ENCODE measurements at regions of chr6 and their contacts with region 1.

Region 1: GRCh38 chr6:124742971-124743370 is 219.3 kb upstream of the RNF217 start:
- DNase-seq: no peak
- ATAC-seq: no peak
- H3K4me3 ChIP-seq: no peak overlapping the region
- H3K4me3 Mint-ChIP-seq: no peak overlapping the region
- H3K27ac ChIP-seq: no peak overlapping the region
- H3K27ac Mint-ChIP-seq: no peak overlapping the region
- H3K4me1 ChIP-seq: no peaks in the 10 kb centered on the region
- H3K4me1 Mint-ChIP-seq: no peaks in the 10 kb centered on the region
- H3K27me3 ChIP-seq: no peaks in the 10 kb centered on the region
- H3K27me3 Mint-ChIP-seq: no peaks in the 10 kb centered on the region
- CTCF ChIP-seq: no peak

Region 2: GRCh38 chr6:124694139-124694782 is 48.7 kb before region 1 on chr6:
- CTCF ChIA-PET with region 1: no interaction called
- POLR2A ChIA-PET with region 1: no interaction called
- intact Hi-C with region 1: loop called in 1 of 2 experiments (anchors 10 kb)
- DNase-seq: no peak
- ATAC-seq: no peak
- H3K4me3 ChIP-seq: no peak overlapping the region
- H3K4me3 Mint-ChIP-seq: no peak overlapping the region
- H3K27ac ChIP-seq: no peak overlapping the region
- H3K27ac Mint-ChIP-seq: no peak overlapping the region
- H3K4me1 ChIP-seq: no peaks in the 10 kb centered on the region
- H3K4me1 Mint-ChIP-seq: no peaks in the 10 kb centered on the region
- H3K27me3 ChIP-seq: no peaks in the 10 kb centered on the region
- H3K27me3 Mint-ChIP-seq: no peaks in the 10 kb centered on the region
- CTCF ChIP-seq: no peak

Measured in CD8-positive, alpha-beta T cell (primary cell).